ENCODE measurements at regions of chr2 and their contacts with region 1.

Region 1: GRCh38 chr2:237223201-237223861 is 137.6 kb downstream of the COPS8 start:
- DNase-seq: no peak
- ATAC-seq: peak; percentile 86
- H3K4me3 ChIP-seq: no peak overlapping the region
- H3K27ac ChIP-seq: peak overlapping the region; percentile 96
- H3K4me1 ChIP-seq: peaks cover 36% of the 10 kb centered on the region
- H3K27me3 ChIP-seq: no peaks in the 10 kb centered on the region
- CTCF ChIP-seq: no peak

Region 2: GRCh38 chr2:237171396-237171795 is 51.9 kb before region 1 on chr2:
- CTCF ChIA-PET with region 1: no interaction called
- POLR2A ChIA-PET with region 1: no interaction called
- in situ Hi-C with region 1: no loop called
- intact Hi-C with region 1: loop called (anchors 5 kb)
- DNase-seq: peak; percentile 50
- ATAC-seq: peak; percentile 93
- H3K4me3 ChIP-seq: peak overlapping the region; percentile 10 to 19; a peak in 3 of 4 replicates
- H3K27ac ChIP-seq: peak overlapping the region; percentile 89
- H3K4me1 ChIP-seq: peaks cover 10% of the 10 kb centered on the region
- H3K27me3 ChIP-seq: no peaks in the 10 kb centered on the region
- CTCF ChIP-seq: peak; percentile 25; the same call in 1 of the 2 replicates

Region 3: GRCh38 chr2:238060542-238061314 is 837.4 kb after region 1 on chr2 and contains the start of gene SCLY:
- CTCF ChIA-PET with region 1: no interaction called
- POLR2A ChIA-PET with region 1: interaction called, 16 read pairs
- in situ Hi-C with region 1: no loop called
- intact Hi-C with region 1: no loop called
- DNase-seq: peak; percentile 79
- ATAC-seq: peak; percentile 98
- H3K4me3 ChIP-seq: peak within 1 kb of the TSS; percentile 95 to 96
- H3K27ac ChIP-seq: peak within 1 kb of the TSS; percentile 95
- H3K4me1 ChIP-seq: peaks cover 10% of the 10 kb centered on the region
- H3K27me3 ChIP-seq: no peaks in the 10 kb centered on the region
- CTCF ChIP-seq: no peak
- total RNA-seq, gene SCLY: 31.4 TPM